MCF 10A (cell line): ENCODE measurements at regions of chr20 and their contacts with region 1.

Region 1: GRCh38 chr20:12970372-12970821 is 38.4 kb upstream of the SPTLC3 start:
- DNase-seq: peak; percentile 56
- H3K4me3 Mint-ChIP-seq: no peak overlapping the region
- H3K27ac Mint-ChIP-seq: no peak overlapping the region
- H3K4me1 Mint-ChIP-seq: no peaks in the 10 kb centered on the region
- H3K27me3 Mint-ChIP-seq: no peaks in the 10 kb centered on the region
- CTCF ChIP-seq: peak; percentile 70

Region 2: GRCh38 chr20:11676630-11677284 is 1293.6 kb before region 1 on chr20:
- CTCF ChIA-PET with region 1: interaction called, 18 read pairs
- POLR2A ChIA-PET with region 1: no interaction called
- intact Hi-C with region 1: loop called (anchors 1 kb)
- DNase-seq: peak; percentile 61
- H3K4me3 Mint-ChIP-seq: no peak overlapping the region
- H3K27ac Mint-ChIP-seq: no peak overlapping the region
- H3K4me1 Mint-ChIP-seq: no peaks in the 10 kb centered on the region
- H3K27me3 Mint-ChIP-seq: no peaks in the 10 kb centered on the region
- CTCF ChIP-seq: peak; percentile 93

Region 3: DNA sequence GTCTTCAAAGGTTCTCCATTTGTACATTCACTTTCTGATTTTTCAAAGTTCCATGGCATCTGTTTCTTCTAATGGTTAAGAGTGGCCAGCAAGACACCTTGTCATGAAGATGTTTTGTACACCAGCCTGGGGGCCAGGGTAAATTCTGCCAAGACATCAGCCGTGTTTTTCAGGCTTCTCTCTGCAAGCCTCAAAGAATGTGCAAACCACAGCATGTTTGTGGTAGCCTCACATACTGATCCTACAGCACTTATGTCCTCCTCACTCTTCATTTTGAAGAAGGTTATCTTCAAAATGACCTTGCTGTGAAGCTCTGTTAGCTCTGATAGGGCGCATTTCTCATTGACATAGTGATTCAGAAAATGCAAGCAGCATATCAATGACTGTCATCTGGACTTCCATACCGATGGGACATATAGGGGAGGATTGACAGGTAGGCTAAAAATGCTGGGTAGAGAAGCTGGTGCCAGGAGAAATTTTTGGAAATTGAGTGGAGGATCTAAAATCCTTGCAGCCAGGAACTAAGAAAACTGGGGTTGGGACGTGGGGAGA is 20.9 kb before region 1 on chr20:
- CTCF ChIA-PET with region 1: interaction called, 21 read pairs
- POLR2A ChIA-PET with region 1: no interaction called
- intact Hi-C with region 1: no loop called
- DNase-seq: no peak
- H3K4me3 Mint-ChIP-seq: no peak overlapping the region
- H3K27ac Mint-ChIP-seq: peak overlapping the region; percentile 49
- H3K4me1 Mint-ChIP-seq: no peaks in the 10 kb centered on the region
- H3K27me3 Mint-ChIP-seq: no peaks in the 10 kb centered on the region
- CTCF ChIP-seq: no peak

Region 4: GRCh38 chr20:13009682-13010406 is 39.4 kb after region 1 on chr20:
- CTCF ChIA-PET with region 1: interaction called, 25 read pairs
- POLR2A ChIA-PET with region 1: interaction called, 20 read pairs
- intact Hi-C with region 1: loop called (anchors 2 kb)
- DNase-seq: peak; percentile 86
- H3K4me3 Mint-ChIP-seq: peak overlapping the region; percentile 81
- H3K27ac Mint-ChIP-seq: peak overlapping the region; percentile 92
- H3K4me1 Mint-ChIP-seq: peaks cover 55% of the 10 kb centered on the region
- H3K27me3 Mint-ChIP-seq: no peaks in the 10 kb centered on the region
- CTCF ChIP-seq: no peak

Region 5: DNA sequence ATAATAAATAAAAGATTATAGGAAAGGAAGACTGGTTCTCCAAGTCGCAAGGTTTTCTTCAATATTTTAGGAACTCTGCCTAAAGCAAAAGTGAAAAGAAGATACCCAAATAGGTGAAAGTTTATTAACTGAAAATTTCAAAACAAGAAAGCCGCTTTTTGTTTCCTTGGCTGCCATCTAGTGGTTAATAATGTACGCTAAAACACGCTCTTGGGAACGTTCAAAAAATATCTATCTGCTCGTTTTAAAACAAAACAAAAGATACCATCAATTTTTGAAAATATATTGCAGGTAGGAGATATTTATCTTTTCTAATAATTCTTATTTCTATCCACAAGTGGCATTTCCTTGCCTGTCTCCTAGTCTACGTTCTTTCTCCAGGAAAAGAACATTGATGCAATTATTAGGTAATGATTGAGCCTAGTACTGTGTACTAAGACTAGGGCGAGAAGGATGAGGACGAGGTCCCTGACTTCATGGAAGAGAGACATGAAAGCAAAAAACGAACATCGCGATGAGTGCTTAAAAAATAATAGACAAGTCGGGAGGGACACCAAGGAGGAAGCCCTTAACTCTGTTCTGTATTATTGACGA is 135.6 kb after region 1 on chr20:
- CTCF ChIA-PET with region 1: interaction called, 304 read pairs
- POLR2A ChIA-PET with region 1: interaction called, 4 read pairs
- intact Hi-C with region 1: loop called (anchors 1 kb)
- DNase-seq: peak; percentile 51
- H3K4me3 Mint-ChIP-seq: no peak overlapping the region
- H3K27ac Mint-ChIP-seq: no peak overlapping the region
- H3K4me1 Mint-ChIP-seq: peaks cover 11% of the 10 kb centered on the region
- H3K27me3 Mint-ChIP-seq: no peaks in the 10 kb centered on the region
- CTCF ChIP-seq: peak; percentile 66

Region 6: DNA sequence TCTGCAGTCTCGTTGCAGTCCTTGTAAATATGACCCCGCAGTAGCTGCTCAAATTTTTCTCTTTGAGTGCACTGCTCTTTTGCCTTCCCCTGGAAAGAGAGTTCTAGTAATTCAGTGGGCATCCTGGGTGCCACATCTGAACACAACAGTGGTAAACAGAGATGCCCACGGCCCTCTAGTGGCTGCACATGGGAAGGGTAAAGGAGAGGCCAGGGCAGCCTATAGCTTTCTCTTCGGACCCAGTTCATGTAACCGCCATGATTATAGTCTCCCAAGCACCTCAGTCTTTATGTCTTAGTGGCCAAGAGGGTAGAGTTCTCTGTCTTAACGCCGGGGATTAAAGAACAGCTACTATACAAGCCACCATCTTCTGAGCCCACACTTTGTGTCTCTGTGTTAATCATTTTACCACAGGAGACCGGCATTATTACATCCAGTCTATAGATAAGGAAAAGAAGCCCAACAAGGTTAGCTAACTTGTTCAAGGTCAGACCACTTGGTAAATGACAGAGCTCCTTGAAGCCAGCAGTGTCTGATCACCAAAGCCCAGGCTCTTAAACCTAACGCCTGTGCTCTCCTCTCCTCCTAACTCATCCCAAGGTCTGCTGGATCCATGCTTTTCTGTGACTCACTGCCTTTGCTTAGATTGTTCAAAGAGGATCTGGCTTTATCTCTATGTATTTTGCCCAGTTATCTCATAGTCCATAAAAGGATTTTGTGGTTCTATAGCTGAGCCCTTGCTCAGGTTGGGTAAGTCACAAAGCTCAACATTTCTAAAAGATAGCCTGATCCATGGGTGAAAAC is 332.5 kb after region 1 on chr20:
- CTCF ChIA-PET with region 1: interaction called, 20 read pairs
- POLR2A ChIA-PET with region 1: no interaction called
- intact Hi-C with region 1: loop called (anchors 1 kb)
- DNase-seq: peak; percentile 61
- H3K4me3 Mint-ChIP-seq: no peak overlapping the region
- H3K27ac Mint-ChIP-seq: no peak overlapping the region
- H3K4me1 Mint-ChIP-seq: no peaks in the 10 kb centered on the region
- H3K27me3 Mint-ChIP-seq: no peaks in the 10 kb centered on the region
- CTCF ChIP-seq: peak; percentile 68